Panc1 (cell line): ENCODE measurements at regions of chr6 and their contacts with region 1.

Region 1: GRCh38 chr6:85482905-85483700 is 33.2 kb downstream of the NT5E start:
- DNase-seq: no peak
- ATAC-seq: peak; percentile 94
- H3K4me3 ChIP-seq: no peak overlapping the region
- H3K27ac ChIP-seq: peak overlapping the region; percentile 11; the same call in 1 of the 2 replicates
- H3K4me1 ChIP-seq: no peaks in the 10 kb centered on the region; the same call in 1 of the 2 replicates
- H3K27me3 ChIP-seq: no peaks in the 10 kb centered on the region
- CTCF ChIP-seq: peak; percentile 98

Region 2: DNA sequence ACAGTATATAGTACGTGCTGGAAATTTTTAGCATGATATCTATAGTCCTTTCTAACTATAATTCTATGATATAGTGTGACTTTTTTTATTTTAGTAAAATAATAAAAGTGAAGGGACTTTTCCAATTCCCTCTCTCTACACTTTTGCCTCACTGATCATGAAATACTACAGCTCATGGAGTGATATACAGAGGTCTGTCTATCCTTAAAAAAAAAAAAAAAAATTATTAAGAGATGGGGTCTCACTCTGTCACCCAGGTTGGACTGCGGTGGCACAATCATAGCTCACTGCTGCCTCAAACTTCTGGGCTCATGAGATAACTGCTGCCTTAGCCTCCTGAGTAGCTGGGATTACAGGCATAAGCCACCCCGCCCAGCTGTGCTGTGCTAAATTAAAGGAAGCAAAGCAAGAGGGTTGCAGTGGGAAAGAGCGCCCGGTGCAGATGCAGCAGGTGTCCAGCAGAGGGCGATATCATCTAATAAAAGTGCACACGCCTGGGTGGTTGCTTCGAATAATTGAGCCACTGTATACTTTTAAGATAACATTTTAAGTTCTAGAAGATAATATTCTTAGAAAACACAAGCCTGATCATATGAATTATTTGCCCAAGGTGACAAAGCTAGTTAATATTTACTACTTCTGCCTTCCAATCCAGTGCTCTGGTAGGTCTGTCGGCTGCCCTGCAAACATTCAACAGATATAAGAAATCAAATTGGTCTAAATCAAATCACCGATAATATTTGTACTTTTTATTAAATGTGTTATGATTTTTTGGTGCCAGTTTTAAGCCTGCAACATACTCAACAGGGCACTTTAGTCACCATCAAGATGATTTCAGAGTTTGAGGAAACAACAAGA is 128.1 kb before region 1 on chr6:
- CTCF ChIA-PET with region 1: interaction called, 9 read pairs
- POLR2A ChIA-PET with region 1: no interaction called
- in situ Hi-C with region 1: no loop called
- intact Hi-C with region 1: loop called (anchors 1 kb)
- DNase-seq: peak; percentile 75
- ATAC-seq: peak; percentile 96
- H3K4me3 ChIP-seq: no peak overlapping the region
- H3K27ac ChIP-seq: no peak overlapping the region
- H3K4me1 ChIP-seq: no peaks in the 10 kb centered on the region
- H3K27me3 ChIP-seq: no peaks in the 10 kb centered on the region
- CTCF ChIP-seq: peak; percentile 95

Region 3: GRCh38 chr6:85449818-85450759 is 33.0 kb before region 1 on chr6 and contains the start of gene NT5E:
- CTCF ChIA-PET with region 1: interaction called, 3 read pairs
- POLR2A ChIA-PET with region 1: interaction called, 16 read pairs
- in situ Hi-C with region 1: no loop called
- intact Hi-C with region 1: no loop called
- DNase-seq: no peak
- ATAC-seq: peak; percentile 95
- H3K4me3 ChIP-seq: peak within 1 kb of the TSS; percentile 87 to 96
- H3K27ac ChIP-seq: peak within 1 kb of the TSS; percentile 93
- H3K4me1 ChIP-seq: peaks cover 40% of the 10 kb centered on the region
- H3K27me3 ChIP-seq: no peaks in the 10 kb centered on the region
- CTCF ChIP-seq: peak; percentile 39; the same call in 1 of the 2 replicates
- total RNA-seq, gene NT5E: 58.4 TPM

Region 4: GRCh38 chr6:85460921-85461797 is 21.9 kb before region 1 on chr6:
- CTCF ChIA-PET with region 1: interaction called, 10 read pairs
- POLR2A ChIA-PET with region 1: interaction called, 3 read pairs
- in situ Hi-C with region 1: no loop called
- intact Hi-C with region 1: no loop called
- DNase-seq: no peak
- ATAC-seq: no peak
- H3K4me3 ChIP-seq: no peak overlapping the region
- H3K27ac ChIP-seq: peak overlapping the region; percentile 79
- H3K4me1 ChIP-seq: peaks cover 95% of the 10 kb centered on the region
- H3K27me3 ChIP-seq: no peaks in the 10 kb centered on the region
- CTCF ChIP-seq: no peak

Region 5: DNA sequence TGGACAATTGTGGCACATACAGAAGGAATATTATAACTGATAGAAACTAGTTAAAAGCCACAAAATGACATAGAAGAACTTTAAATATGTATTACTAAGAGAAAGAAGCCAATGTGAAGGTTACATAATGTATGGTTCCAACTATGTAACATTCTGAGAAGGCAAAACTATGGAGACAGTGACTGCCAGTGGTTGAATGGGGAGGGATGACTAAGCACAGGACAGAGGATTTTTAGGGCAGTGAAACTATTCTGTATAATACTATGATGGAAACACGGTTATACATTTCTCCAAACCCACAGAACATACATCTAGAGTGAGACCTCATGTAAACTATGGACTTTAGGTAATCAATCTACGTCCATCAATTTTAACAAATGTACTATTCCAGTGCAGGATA is 137.2 kb after region 1 on chr6:
- CTCF ChIA-PET with region 1: no interaction called
- POLR2A ChIA-PET with region 1: no interaction called
- in situ Hi-C with region 1: no loop called
- intact Hi-C with region 1: no loop called
- DNase-seq: no peak
- ATAC-seq: no peak
- H3K4me3 ChIP-seq: no peak overlapping the region
- H3K27ac ChIP-seq: no peak overlapping the region
- H3K4me1 ChIP-seq: no peaks in the 10 kb centered on the region
- H3K27me3 ChIP-seq: no peaks in the 10 kb centered on the region
- CTCF ChIP-seq: no peak